Posterior cingulate gyrus (tissue), 11 donors: ENCODE measurements at regions of chr6 and their contacts with region 1.

Region 1: GRCh38 chr6:24064082-24064481 is 61.9 kb upstream of the NRSN1 start:
- DNase-seq: peak in 2 of 10 donors; percentile 10 to 22

Region 2: DNA sequence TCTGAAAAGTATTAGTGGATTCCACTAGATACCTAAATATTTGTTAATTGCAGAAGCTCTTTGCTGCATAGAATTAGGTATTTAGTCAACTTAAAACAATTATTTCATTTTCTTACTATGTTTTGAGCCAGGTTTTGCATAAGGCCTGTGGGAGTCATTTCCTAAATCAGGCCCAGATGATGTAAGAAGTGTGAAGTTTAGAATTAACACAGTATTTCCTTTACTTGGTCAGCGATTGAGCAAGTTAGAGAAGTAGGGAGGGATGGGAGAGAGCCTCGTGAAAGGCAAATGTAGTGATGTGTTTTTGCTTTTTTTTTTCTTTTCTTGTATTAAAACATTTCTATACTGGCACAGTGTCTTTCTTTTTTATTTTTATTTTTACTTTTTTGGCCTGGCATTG is 783.6 kb before region 1 on chr6:
- intact Hi-C with region 1: no loop called
- DNase-seq: no peak

Region 3: GRCh38 chr6:23775127-23775526 is 289.0 kb before region 1 on chr6:
- intact Hi-C with region 1: no loop called
- DNase-seq: no peak

Region 4: GRCh38 chr6:24205020-24205492 is 141.0 kb after region 1 on chr6:
- intact Hi-C with region 1: loop called (anchors 1 kb)
- DNase-seq: peak in 3 of 10 donors; percentile 11 to 69 (median 12)

Region 5: GRCh38 chr6:24524805-24525204 is 460.7 kb after region 1 on chr6:
- intact Hi-C with region 1: no loop called
- DNase-seq: peak in 2 of 10 donors; percentile 10 to 23